ENCODE measurements at regions of chr13 and their contacts with region 1.

Region 1: GRCh38 chr13:96141027-96141426 is 51.1 kb downstream of the HS6ST3 start:
- DNase-seq: no peak
- ATAC-seq: no peak
- H3K4me3 ChIP-seq: no peak overlapping the region
- H3K27ac ChIP-seq: no peak overlapping the region
- H3K4me1 ChIP-seq: no peaks in the 10 kb centered on the region
- H3K27me3 ChIP-seq: no peaks in the 10 kb centered on the region
- CTCF ChIP-seq: peak in 1 of 3 experiments; percentile 5; a peak in 2 of 6 replicates
- EP300 ChIP-seq: no peak
- POLR2A ChIP-seq: no peak
- RAD21 ChIP-seq: 0 out of 2 replicates have a peak, but pooled peaks have one; percentile 5

Region 2: GRCh38 chr13:96181911-96182310 is 40.9 kb after region 1 on chr13:
- CTCF ChIA-PET with region 1: no interaction called
- POLR2A ChIA-PET with region 1: no interaction called
- RAD21 ChIA-PET with region 1: no interaction called
- SMC1A ChIA-PET with region 1: no interaction called
- in situ Hi-C with region 1: no loop called
- intact Hi-C with region 1: no loop called
- DNase-seq: no peak
- ATAC-seq: no peak
- H3K4me3 ChIP-seq: no peak overlapping the region
- H3K27ac ChIP-seq: no peak overlapping the region
- H3K4me1 ChIP-seq: no peaks in the 10 kb centered on the region
- H3K27me3 ChIP-seq: no peaks in the 10 kb centered on the region
- CTCF ChIP-seq: no peak
- EP300 ChIP-seq: no peak
- POLR2A ChIP-seq: no peak
- RAD21 ChIP-seq: no peak

Region 3: GRCh38 chr13:96817336-96817941 is 676.4 kb after region 1 on chr13:
- CTCF ChIA-PET with region 1: interaction called, 17 read pairs
- POLR2A ChIA-PET with region 1: no interaction called
- RAD21 ChIA-PET with region 1: no interaction called
- SMC1A ChIA-PET with region 1: interaction called, 5 read pairs
- in situ Hi-C with region 1: no loop called
- intact Hi-C with region 1: no loop called
- DNase-seq: no peak
- ATAC-seq: no peak
- H3K4me3 ChIP-seq: no peak overlapping the region
- H3K27ac ChIP-seq: no peak overlapping the region
- H3K4me1 ChIP-seq: no peaks in the 10 kb centered on the region
- H3K27me3 ChIP-seq: no peaks in the 10 kb centered on the region
- CTCF ChIP-seq: peak; percentile 31 to 35 (median 32); a peak in 2 of 6 replicates
- EP300 ChIP-seq: no peak
- POLR2A ChIP-seq: no peak
- RAD21 ChIP-seq: peak; percentile 44; the same call in 1 of the 2 replicates

Measured in GM12878 (cell line).